Heart left ventricle (tissue), 16 donors: ENCODE measurements at regions of chr3 and their contacts with region 1.

Region 1: DNA sequence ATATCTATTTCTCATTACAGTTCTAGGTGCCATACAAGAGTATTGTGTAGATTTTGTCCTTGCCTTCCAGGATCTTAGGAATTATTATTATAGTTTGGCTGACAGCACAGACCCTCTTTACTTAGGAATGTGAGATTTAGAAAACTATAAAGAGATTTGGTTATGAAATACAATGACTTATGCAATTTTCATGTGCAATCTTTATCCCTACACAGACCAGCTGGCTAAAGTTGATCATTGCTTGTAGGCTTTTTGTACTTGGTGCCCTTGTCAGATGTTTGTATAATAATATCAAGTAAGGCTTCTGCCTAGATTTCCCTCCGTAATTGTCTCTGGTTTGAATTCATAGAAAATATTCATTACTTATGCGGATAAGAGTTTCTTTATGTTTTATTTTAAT is 174.5 kb upstream of the GAP43 start:
- DNase-seq: no peak
- ATAC-seq: no peak
- H3K4me3 ChIP-seq: no peak overlapping the region
- H3K27ac ChIP-seq: no peak overlapping the region
- H3K4me1 ChIP-seq: no peaks in the 10 kb centered on the region
- H3K27me3 ChIP-seq: no peaks in the 10 kb centered on the region
- CTCF ChIP-seq: no peak
- POLR2A ChIP-seq: no peak

Region 2: GRCh38 chr3:115418583-115418982 is 30.3 kb before region 1 on chr3:
- intact Hi-C with region 1: loop called in 1 of 10 experiments (anchors 2 kb)
- DNase-seq: no peak
- ATAC-seq: no peak
- H3K4me3 ChIP-seq: no peak overlapping the region
- H3K27ac ChIP-seq: no peak overlapping the region
- H3K4me1 ChIP-seq: no peaks in the 10 kb centered on the region
- H3K27me3 ChIP-seq: no peaks in the 10 kb centered on the region
- CTCF ChIP-seq: no peak
- POLR2A ChIP-seq: no peak

Region 3: DNA sequence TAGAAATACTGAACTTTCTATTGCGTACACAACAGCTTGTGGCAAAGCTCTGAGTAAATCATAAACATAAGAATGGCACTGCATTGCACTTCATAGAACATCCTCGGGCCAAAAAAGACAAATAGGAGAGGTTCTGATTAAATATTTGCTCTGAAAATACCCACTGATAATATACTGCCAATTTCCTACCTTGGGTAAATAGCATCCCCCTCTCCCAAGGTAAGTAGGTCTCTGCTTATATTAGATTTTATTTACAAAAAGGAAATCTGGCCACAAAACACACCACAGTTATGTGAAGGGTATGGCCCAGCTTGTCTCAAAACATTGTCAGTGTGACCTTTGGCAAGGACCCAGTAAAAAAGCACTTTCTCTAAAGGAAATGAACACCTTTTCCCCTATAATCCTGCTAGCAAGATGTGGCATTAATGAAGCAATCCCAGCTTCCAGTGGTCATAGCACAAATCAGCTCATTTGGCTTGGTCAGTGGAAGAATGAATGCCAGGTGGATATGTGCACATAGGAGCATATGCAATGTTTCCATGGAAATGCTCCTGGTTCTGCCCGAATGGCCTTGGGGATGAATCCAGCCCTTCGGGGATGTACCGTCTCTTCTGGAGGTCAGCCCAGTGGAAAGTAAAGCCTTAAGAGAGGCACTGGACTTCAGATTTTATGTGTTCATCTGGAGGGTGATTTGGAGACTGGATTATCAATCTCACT is 680.5 kb after region 1 on chr3:
- intact Hi-C with region 1: no loop called
- DNase-seq: no peak
- ATAC-seq: no peak
- H3K4me3 ChIP-seq: no peak overlapping the region
- H3K27ac ChIP-seq: no peak overlapping the region
- H3K4me1 ChIP-seq: no peaks in the 10 kb centered on the region
- H3K27me3 ChIP-seq: no peaks in the 10 kb centered on the region
- CTCF ChIP-seq: no peak
- POLR2A ChIP-seq: no peak